A549 (cell line): ENCODE measurements at regions of chr14 and their contacts with region 1.

Region 1: DNA sequence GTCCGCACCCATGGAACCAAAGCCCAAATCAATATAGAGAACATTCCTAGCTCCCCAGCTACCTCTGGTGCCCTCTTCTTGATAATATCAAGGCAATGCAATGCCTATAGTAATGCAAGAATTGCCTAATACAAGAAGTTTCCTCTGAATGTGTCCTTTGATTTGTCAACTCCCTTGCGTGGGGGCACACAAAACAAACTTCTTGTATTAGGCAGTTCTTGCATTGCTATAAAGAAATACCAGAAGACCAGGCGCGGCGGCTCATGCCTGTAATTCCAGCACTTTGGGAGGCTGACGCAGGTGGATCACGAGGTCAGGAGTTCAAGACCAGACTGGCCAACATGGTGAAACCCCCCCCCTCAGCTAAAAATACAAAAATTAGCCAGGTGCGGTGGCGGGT is 10.4 kb upstream of the ITPK1 start:
- DNase-seq: no peak
- ATAC-seq: no peak
- H3K4me3 ChIP-seq: no peak overlapping the region
- H3K27ac ChIP-seq: no peak overlapping the region
- H3K4me1 ChIP-seq: peaks cover under 1% of the 10 kb centered on the region; the same call in 1 of the 3 replicates
- CTCF ChIP-seq: no peak
- EP300 ChIP-seq: no peak
- POLR2A ChIP-seq: no peak
- RAD21 ChIP-seq: no peak

Region 2: GRCh38 chr14:93090826-93091555 is 35.1 kb before region 1 on chr14:
- CTCF ChIA-PET with region 1: no interaction called
- POLR2A ChIA-PET with region 1: no interaction called
- DNase-seq: no peak
- ATAC-seq: no peak
- H3K4me3 ChIP-seq: no peak overlapping the region
- H3K27ac ChIP-seq: no peak overlapping the region
- H3K4me1 ChIP-seq: peaks cover 10% of the 10 kb centered on the region
- CTCF ChIP-seq: no peak
- EP300 ChIP-seq: no peak
- POLR2A ChIP-seq: no peak
- RAD21 ChIP-seq: no peak

Region 3: GRCh38 chr14:93137864-93138263 is 11.8 kb after region 1 on chr14:
- CTCF ChIA-PET with region 1: interaction called, 371 read pairs
- POLR2A ChIA-PET with region 1: no interaction called
- DNase-seq: peak in 1 of 2 experiments; percentile 48
- ATAC-seq: peak; percentile 38 to 51; a peak in 3 of 6 replicates
- H3K4me3 ChIP-seq: no peak overlapping the region
- H3K27ac ChIP-seq: no peak overlapping the region
- H3K4me1 ChIP-seq: peaks cover 17% of the 10 kb centered on the region
- CTCF ChIP-seq: no peak
- EP300 ChIP-seq: no peak
- POLR2A ChIP-seq: no peak
- RAD21 ChIP-seq: no peak; a peak in 1 of 5 replicates